Activated CD4-positive, alpha-beta T cell treated with anti-CD3 and anti-CD28 coated beads, Interleukin-2, amount 10 ng/mL, durations not matched to agents 24 days and 14 days (primary cell): ENCODE measurements at regions of chr2 and their contacts with region 1.

Region 1: DNA sequence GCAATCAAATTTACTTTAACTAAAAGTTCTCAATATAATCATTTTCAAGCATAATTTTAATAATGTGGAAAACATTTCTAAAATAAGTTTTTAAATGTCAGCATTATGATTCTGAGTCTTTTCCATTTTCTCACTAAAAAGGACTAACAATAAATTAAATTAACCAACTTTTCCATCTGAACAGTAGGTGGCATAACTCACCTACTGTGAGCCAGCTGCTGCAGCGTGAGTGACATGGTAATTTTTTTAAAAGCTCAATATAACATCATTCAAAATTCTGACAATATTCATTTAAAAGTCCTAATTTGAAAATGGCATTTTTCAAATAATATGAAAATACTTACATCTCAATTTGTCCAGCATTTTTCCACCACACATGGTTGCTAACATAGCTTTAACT is 66.5 kb downstream of the DTNB start:
- DNase-seq: peak; percentile 63
- H3K4me3 Mint-ChIP-seq: no peak overlapping the region
- H3K27ac Mint-ChIP-seq: no peak overlapping the region
- H3K4me1 Mint-ChIP-seq: peaks cover 17% of the 10 kb centered on the region
- H3K27me3 Mint-ChIP-seq: no peaks in the 10 kb centered on the region

Region 2: GRCh38 chr2:25664183-25664964 is 57.5 kb after region 1 on chr2:
- intact Hi-C with region 1: loop called (anchors 2 kb)
- DNase-seq: peak; percentile 73
- H3K4me3 Mint-ChIP-seq: peak overlapping the region; percentile 14
- H3K27ac Mint-ChIP-seq: no peak overlapping the region
- H3K4me1 Mint-ChIP-seq: peaks cover 10% of the 10 kb centered on the region
- H3K27me3 Mint-ChIP-seq: peaks cover 2% of the 10 kb centered on the region

Region 3: DNA sequence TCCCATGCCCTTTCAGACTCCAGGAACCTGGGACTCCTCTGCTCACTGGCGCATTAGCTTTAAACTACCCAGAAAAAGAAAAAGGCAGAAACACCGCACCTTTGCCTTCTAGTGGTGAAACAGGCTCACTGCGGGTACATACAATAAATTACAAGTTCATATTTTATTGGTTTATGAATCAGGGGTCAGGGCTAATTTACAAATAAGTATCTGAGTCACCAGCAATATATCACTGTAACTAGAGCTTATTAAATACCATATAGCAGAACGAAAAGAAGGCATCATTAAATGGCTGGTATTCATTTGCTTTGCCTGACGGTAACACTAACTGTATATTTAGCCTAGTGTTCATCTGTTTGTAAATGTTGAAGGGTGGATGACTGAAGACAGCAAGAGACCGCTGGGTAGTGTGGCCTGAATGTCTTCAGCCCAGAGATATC is 93.3 kb after region 1 on chr2:
- intact Hi-C with region 1: loop called (anchors 1 kb)
- DNase-seq: peak; percentile 75
- H3K4me3 Mint-ChIP-seq: no peak overlapping the region
- H3K27ac Mint-ChIP-seq: no peak overlapping the region
- H3K4me1 Mint-ChIP-seq: peaks cover 3% of the 10 kb centered on the region
- H3K27me3 Mint-ChIP-seq: peaks cover 2% of the 10 kb centered on the region